Activated B cell treated with CpG ODN at 0.5 μM for 24 hours (primary cell): ENCODE measurements at regions of chr22 and their contacts with region 1.

Region 1: DNA sequence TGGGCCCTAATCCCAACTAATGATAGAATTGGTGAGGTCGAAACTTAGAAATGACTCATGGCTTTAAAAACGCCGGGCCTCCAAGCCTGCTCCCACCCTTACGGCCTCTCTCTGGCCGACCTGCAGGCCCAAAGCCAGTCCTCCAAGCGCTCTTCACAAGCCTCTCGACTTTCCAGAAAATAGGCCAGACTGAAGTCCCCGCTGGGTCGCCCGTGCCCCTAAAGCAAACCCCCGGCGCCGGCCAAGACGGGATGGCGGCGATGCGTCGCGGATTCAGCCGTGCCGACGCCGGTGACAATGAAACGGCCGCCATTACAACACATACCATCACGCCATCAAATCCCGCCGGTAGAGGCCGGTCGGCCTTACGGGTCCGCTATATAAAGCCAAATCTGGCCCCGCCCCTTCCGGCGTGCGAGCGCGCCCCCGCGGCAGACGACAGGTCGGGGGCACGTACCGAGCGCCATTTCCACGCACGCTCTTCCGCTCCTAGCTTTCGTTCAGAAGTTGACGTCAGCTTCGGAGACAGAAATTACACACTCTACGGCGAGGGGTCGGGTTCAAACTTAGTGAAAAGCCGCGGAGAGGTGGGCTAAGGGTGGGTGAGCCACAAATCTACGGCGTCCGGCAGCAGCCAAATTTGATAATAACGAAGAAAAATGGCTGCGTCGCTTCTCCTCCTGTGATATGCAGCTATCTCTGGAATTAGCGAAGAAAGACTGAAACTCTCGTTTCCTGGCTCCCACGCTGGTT is at the start of gene RPL3:
- DNase-seq: peak; percentile 99
- ATAC-seq: peak; percentile 87
- H3K4me3 Mint-ChIP-seq: peak within 1 kb of the TSS; percentile 100
- H3K27ac Mint-ChIP-seq: peak within 1 kb of the TSS; percentile 99
- H3K4me1 Mint-ChIP-seq: peaks cover 46% of the 10 kb centered on the region
- H3K27me3 Mint-ChIP-seq: peaks cover 2% of the 10 kb centered on the region
- CTCF ChIP-seq: no peak
- total RNA-seq, gene RPL3: 3,087 and 3,439 TPM in 2 replicates

Region 2: GRCh38 chr22:38996105-38996504 is 323.3 kb before region 1 on chr22:
- CTCF ChIA-PET with region 1: no interaction called
- POLR2A ChIA-PET with region 1: interaction called, 11 read pairs
- intact Hi-C with region 1: no loop called
- DNase-seq: no peak
- ATAC-seq: no peak
- H3K4me3 Mint-ChIP-seq: no peak overlapping the region
- H3K27ac Mint-ChIP-seq: no peak overlapping the region
- H3K4me1 Mint-ChIP-seq: peaks cover 5% of the 10 kb centered on the region
- H3K27me3 Mint-ChIP-seq: peaks cover 12% of the 10 kb centered on the region
- CTCF ChIP-seq: no peak

Region 3: DNA sequence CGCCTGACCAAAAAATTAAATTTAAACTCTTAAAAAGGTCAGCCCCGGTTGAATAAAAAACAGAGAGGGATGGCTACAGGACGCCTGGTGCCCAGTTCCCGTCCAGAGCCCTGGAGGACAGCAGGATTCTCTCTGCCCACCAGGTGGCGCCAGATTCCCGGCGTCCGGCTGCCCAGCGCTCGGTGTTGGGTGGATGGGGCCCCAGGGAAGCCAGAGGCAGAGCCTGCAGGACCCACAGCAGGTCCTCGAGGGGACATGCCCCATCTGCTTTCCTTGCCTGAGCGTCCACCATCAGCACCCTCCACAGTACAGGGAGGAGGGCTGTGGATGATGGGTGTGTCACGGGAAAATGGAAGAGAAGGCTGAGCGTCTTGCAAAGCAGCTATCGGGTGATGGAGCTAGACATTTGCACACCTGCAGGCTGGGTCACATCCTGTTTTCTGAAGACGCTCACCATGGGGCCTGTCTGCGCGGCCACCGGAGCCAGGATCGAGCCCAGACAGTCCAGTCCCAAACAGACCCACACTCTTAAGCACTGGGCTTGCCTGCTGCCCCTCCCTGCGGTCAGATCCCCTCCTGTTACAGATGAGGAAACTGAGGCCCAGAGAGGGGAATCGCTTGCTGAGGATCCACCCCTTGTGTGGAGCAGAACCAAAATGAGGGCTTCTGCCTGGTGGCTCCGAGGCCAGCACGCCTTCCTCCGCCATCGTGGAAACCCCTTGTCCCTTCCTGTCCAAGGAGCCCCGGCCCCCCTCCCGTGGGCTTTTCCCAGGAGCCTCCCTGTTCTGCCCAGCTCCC is 148.4 kb before region 1 on chr22:
- CTCF ChIA-PET with region 1: interaction called, 62 read pairs
- POLR2A ChIA-PET with region 1: interaction called, 26 read pairs
- intact Hi-C with region 1: loop called (anchors 1 kb)
- DNase-seq: peak; percentile 85
- ATAC-seq: peak; percentile 83
- H3K4me3 Mint-ChIP-seq: peak overlapping the region; percentile 77
- H3K27ac Mint-ChIP-seq: peak overlapping the region; percentile 76
- H3K4me1 Mint-ChIP-seq: peaks cover 42% of the 10 kb centered on the region
- H3K27me3 Mint-ChIP-seq: no peaks in the 10 kb centered on the region
- CTCF ChIP-seq: peak; percentile 93

Region 4: GRCh38 chr22:39343259-39344048 is 24.0 kb after region 1 on chr22:
- CTCF ChIA-PET with region 1: interaction called, 7 read pairs
- POLR2A ChIA-PET with region 1: interaction called, 94 read pairs
- intact Hi-C with region 1: no loop called
- DNase-seq: peak; percentile 48
- ATAC-seq: peak; percentile 97
- H3K4me3 Mint-ChIP-seq: no peak overlapping the region
- H3K27ac Mint-ChIP-seq: no peak overlapping the region
- H3K4me1 Mint-ChIP-seq: peaks cover 5% of the 10 kb centered on the region
- H3K27me3 Mint-ChIP-seq: peaks cover 9% of the 10 kb centered on the region
- CTCF ChIP-seq: peak; percentile 33

Region 5: DNA sequence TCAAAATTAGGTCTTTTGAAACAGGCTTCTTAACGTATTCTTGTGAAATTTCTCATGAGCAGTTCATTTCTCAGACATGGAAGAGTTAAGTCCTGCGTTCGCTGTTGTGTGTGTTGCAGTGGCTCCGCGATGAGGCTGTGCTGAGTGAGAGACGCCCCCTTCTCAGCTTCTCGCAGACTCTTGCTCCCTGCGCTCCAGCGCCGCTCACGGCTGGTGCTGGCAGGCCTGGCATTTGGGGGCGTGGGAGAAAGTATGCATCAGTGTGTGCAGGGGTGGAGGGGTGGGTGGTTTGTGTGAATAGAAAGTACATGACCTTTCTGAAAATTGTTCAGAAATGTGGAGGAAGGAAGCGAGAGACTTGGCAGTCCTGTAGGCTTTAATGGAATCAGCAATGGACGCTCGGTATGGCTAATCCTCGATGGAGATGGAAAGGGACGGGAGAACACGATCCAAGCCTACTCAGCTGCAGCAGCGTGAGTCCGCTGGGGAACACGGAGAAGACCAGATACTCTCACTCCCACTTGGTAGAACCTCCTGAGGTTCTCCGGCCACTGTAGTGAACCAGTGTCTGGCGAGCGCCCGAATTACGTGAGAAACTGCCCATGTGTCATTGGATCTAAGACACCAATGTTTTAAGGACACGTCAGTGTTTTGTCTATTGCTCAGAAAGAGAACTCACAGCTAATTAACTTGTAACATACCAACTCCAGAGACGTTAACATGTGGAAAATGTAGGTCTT is 86.1 kb after region 1 on chr22:
- CTCF ChIA-PET with region 1: no interaction called
- POLR2A ChIA-PET with region 1: interaction called, 35 read pairs
- intact Hi-C with region 1: no loop called
- DNase-seq: no peak
- ATAC-seq: no peak
- H3K4me3 Mint-ChIP-seq: no peak overlapping the region
- H3K27ac Mint-ChIP-seq: no peak overlapping the region
- H3K4me1 Mint-ChIP-seq: peaks cover 20% of the 10 kb centered on the region
- H3K27me3 Mint-ChIP-seq: no peaks in the 10 kb centered on the region
- CTCF ChIP-seq: no peak

Region 6: DNA sequence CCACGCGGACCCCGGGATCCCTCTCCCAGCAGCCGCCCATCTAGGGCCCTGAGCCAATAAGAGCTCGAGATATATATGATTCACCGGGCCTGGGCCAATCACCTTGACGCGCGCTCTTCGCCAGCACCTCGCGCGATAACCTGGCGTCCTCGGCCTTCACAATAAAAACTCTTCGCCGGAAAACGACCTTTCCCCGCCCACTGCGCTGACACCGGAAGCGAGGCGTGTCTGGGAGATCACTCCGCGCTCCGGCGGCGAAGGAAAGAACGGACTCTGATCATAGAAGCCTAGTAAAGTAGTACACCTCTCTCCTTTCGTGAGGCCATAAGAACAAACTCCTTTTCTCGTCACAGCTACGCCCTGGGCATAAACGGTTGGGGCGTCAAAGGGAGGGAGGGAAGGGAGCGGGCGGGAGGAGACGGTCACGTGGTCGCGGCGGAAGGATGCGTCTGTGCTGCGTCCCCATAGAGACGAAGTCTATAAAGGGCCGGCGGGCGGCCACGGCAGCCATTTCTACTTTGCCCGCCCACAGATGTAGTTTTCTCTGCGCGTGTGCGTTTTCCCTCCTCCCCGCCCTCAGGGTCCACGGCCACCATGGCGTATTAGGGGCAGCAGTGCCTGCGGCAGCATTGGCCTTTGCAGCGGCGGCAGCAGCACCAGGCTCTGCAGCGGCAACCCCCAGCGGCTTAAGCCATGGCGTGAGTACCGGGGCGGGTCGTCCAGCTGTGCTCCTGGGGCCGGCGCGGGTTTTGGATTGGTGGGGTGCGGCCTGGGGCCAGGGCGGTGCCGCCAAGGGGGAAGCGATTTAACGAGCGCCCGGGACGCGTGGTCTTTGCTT is 200.8 kb after region 1 on chr22 and contains the start of gene ATF4:
- CTCF ChIA-PET with region 1: interaction called, 4 read pairs
- POLR2A ChIA-PET with region 1: interaction called, 82 read pairs
- intact Hi-C with region 1: loop called (anchors 1 kb)
- DNase-seq: peak; percentile 88
- ATAC-seq: peak; percentile 91
- H3K4me3 Mint-ChIP-seq: peak within 1 kb of the TSS; percentile 91
- H3K27ac Mint-ChIP-seq: peak within 1 kb of the TSS; percentile 98
- H3K4me1 Mint-ChIP-seq: peaks cover 58% of the 10 kb centered on the region
- H3K27me3 Mint-ChIP-seq: peaks cover 2% of the 10 kb centered on the region
- CTCF ChIP-seq: no peak
- total RNA-seq, gene ATF4: 363 and 368 TPM in 2 replicates